ENCODE measurements at regions of chr2 and their contacts with region 1.

Region 1: DNA sequence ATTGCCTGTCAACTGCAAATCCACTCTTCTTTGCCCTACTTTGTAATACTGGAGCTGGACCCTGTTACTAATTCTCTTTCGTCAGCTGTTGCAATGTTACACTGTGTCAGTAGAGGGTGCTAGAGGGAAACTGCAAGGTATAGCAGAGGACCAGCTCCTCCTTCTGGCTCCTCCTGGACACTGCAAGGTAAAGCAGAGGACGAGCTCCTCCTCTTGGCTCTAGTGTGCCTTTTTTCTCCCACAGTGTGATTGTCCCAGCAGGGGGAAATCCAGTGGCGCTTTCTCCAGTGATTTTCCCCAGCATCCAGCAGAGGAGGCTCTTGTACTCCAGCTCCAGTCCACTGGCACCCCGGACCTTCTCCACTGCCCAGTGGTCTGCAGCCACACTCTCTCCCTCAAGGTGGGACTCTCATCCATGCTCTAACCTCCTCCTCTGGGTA is 95.6 kb downstream of the CAPN13 start:
- DNase-seq: peak; percentile 50
- H3K4me3 ChIP-seq: no peak overlapping the region
- H3K27me3 ChIP-seq: no peaks in the 10 kb centered on the region
- CTCF ChIP-seq: peak; percentile 100

Region 2: GRCh38 chr2:30146438-30147147 is 565.1 kb before region 1 on chr2 and contains the start of gene YPEL5:
- CTCF ChIA-PET with region 1: interaction called, 12 read pairs
- POLR2A ChIA-PET with region 1: no interaction called
- DNase-seq: peak; percentile 98
- H3K4me3 ChIP-seq: peak within 1 kb of the TSS; percentile 99
- H3K27me3 ChIP-seq: peaks cover 4% of the 10 kb centered on the region; the same call in 1 of the 2 replicates
- CTCF ChIP-seq: no peak
- polyA plus RNA-seq, gene YPEL5: 141 and 190 TPM in 2 replicates

Region 3: DNA sequence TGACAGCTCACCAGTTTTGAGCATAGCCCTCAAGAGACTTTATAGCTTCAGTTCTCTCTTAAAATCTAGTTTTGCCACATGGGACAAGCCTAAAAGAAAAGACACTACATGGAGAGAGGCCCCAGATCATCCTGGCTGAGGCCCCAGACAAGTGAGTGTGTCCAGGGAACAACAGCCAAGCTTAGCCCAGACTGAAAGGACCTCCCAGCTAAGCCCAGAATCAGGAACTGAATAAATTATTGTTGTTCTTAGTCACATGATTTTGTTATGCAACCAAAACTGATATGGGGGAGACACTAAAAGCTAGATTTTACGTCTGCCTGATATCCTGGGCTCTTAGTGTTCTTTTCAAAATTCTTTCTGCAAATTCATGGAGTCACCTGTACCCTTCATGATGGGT is 509.7 kb before region 1 on chr2:
- CTCF ChIA-PET with region 1: interaction called, 365 read pairs
- POLR2A ChIA-PET with region 1: no interaction called
- DNase-seq: no peak
- H3K4me3 ChIP-seq: no peak overlapping the region
- H3K27me3 ChIP-seq: no peaks in the 10 kb centered on the region; the same call in 1 of the 2 replicates
- CTCF ChIP-seq: no peak

Region 4: DNA sequence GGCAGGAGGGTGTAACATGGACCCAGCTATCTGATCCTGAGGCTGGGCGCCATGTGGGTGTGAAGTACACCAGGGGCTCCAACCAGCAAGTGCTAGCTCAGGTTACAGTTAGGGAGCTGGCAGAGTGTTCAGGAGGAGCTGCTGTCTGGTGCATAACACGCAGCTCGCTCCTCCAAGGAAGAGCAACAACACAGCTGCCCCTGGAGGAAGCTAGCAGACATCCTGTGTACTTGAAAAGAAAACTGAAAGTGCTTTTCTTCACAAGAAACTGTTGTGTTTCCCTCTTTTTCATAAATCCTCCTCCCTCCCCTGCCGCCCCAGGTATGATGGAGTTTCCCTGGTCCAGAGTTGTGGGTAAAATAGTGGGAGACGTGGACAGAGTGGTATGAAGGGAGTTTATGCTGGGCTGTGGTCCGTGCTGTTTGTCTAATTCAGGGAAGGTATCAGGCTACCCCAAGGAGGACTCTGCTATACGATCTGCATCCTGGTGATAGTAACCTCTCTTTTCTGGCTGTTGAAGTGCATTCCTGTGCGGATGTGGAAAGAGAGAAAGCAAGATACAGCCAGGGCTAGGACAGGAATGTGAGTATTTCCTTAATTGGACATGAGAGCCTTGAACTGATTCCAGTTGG is 486.4 kb before region 1 on chr2:
- CTCF ChIA-PET with region 1: interaction called, 23 read pairs
- POLR2A ChIA-PET with region 1: no interaction called
- DNase-seq: peak; percentile 28
- H3K4me3 ChIP-seq: peak overlapping the region; percentile 24
- H3K27me3 ChIP-seq: peaks cover 6% of the 10 kb centered on the region; the same call in 1 of the 2 replicates
- CTCF ChIP-seq: peak; percentile 26; the same call in 1 of the 2 replicates

Region 5: GRCh38 chr2:30612371-30612770 is 99.3 kb before region 1 on chr2:
- CTCF ChIA-PET with region 1: no interaction called
- POLR2A ChIA-PET with region 1: no interaction called
- DNase-seq: no peak
- H3K4me3 ChIP-seq: no peak overlapping the region
- H3K27me3 ChIP-seq: no peaks in the 10 kb centered on the region
- CTCF ChIP-seq: no peak

Region 6: GRCh38 chr2:30670453-30670852 is 41.2 kb before region 1 on chr2:
- CTCF ChIA-PET with region 1: no interaction called
- POLR2A ChIA-PET with region 1: no interaction called
- DNase-seq: no peak
- H3K4me3 ChIP-seq: no peak overlapping the region
- H3K27me3 ChIP-seq: no peaks in the 10 kb centered on the region
- CTCF ChIP-seq: no peak

Region 7: DNA sequence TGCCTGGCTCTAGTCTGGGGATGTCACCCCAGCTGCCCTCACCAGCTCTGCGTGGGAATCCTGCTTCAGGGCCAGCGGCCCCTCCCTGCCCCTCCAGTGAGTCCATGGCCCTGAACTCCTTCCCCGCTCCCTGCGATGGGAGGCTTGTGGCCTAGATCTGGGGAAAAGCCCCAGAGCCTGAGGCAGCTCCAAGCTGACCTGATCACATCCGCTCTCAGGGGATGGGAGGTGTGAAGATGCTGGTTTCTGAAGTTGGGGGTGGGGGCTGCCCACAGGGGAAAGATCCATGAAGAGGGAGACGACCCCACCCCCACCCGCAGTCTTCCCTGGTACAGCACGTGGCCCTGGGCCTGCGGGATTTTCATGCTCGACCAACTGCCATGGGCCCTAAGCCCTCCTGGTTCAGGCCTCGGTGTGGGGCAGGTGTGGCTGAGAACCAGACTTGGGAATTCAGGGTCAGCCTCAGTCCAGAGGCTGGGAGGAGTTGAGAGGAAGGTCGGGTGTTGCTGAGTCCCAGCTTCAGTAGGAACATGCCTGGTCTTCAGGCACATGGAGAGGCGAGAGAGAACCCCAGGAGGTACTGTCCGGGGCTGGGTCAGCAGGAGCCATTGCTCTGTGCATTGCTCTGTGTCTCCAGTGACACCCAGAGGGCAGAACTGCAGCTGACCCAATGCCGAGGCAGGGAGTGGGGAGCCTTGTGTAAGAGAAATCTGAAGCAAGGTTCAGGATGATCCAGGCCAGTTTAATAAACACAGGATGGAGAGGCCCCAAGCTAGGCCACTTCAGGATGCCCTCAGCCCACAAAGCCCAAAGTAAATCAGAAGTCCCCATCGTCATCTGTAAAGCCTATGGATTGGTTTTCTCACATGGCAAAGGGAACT is 19.5 kb before region 1 on chr2:
- CTCF ChIA-PET with region 1: interaction called, 55 read pairs
- POLR2A ChIA-PET with region 1: no interaction called
- DNase-seq: no peak
- H3K4me3 ChIP-seq: no peak overlapping the region
- H3K27me3 ChIP-seq: peaks cover 2% of the 10 kb centered on the region; the same call in 1 of the 2 replicates
- CTCF ChIP-seq: peak; percentile 47

Region 8: GRCh38 chr2:30862054-30862651 is 150.5 kb after region 1 on chr2:
- CTCF ChIA-PET with region 1: interaction called, 73 read pairs
- POLR2A ChIA-PET with region 1: no interaction called
- DNase-seq: peak; percentile 6
- H3K4me3 ChIP-seq: no peak overlapping the region
- H3K27me3 ChIP-seq: no peaks in the 10 kb centered on the region
- CTCF ChIP-seq: peak; percentile 78

Region 9: GRCh38 chr2:31333527-31334183 is 622.0 kb after region 1 on chr2:
- CTCF ChIA-PET with region 1: interaction called, 51 read pairs
- POLR2A ChIA-PET with region 1: no interaction called
- DNase-seq: peak; percentile 24
- H3K4me3 ChIP-seq: no peak overlapping the region
- H3K27me3 ChIP-seq: no peaks in the 10 kb centered on the region
- CTCF ChIP-seq: peak; percentile 96